Activated CD4-positive, alpha-beta T cell treated with anti-CD3 and anti-CD28 coated beads, Interleukin-2, amount 10 ng/mL, durations not matched to agents 24 days and 14 days (primary cell): ENCODE measurements at regions of chr15 and their contacts with region 1.

Region 1: GRCh38 chr15:50134520-50135024 is 15.5 kb upstream of the ATP8B4 start:
- DNase-seq: peak; percentile 67
- H3K4me3 Mint-ChIP-seq: peak overlapping the region; percentile 63
- H3K27ac Mint-ChIP-seq: peak overlapping the region; percentile 95
- H3K4me1 Mint-ChIP-seq: peaks cover 52% of the 10 kb centered on the region
- H3K27me3 Mint-ChIP-seq: peaks cover 2% of the 10 kb centered on the region

Region 2: DNA sequence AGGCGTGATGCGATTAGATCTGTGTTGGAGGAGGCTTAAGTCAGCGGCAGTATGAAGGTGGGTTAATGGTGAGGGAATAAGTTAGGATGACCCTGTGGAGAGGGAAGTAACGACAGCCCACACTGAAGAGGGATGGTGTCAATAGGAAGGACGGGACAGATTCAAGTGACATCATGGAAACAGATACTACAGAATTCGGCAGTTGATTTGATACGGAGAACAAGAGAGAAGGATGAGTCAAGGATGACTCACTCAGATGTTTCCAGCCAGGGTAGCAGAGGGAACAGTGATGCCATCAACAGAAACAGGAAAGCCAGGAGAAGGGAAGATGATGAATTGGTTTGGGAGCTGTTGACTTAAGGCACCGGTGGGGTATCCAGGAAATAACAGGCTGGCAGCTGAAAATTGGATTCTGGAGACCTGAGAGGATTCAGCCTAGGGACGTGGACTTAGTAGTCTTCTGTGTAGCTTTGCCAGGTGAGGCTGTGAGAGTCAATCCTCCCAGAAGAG is 1208.8 kb before region 1 on chr15:
- intact Hi-C with region 1: loop called (anchors 2 kb)
- DNase-seq: peak; percentile 70
- H3K4me3 Mint-ChIP-seq: peak overlapping the region; percentile 46
- H3K27ac Mint-ChIP-seq: peak overlapping the region; percentile 97
- H3K4me1 Mint-ChIP-seq: peaks cover 61% of the 10 kb centered on the region
- H3K27me3 Mint-ChIP-seq: peaks cover 2% of the 10 kb centered on the region

Region 3: DNA sequence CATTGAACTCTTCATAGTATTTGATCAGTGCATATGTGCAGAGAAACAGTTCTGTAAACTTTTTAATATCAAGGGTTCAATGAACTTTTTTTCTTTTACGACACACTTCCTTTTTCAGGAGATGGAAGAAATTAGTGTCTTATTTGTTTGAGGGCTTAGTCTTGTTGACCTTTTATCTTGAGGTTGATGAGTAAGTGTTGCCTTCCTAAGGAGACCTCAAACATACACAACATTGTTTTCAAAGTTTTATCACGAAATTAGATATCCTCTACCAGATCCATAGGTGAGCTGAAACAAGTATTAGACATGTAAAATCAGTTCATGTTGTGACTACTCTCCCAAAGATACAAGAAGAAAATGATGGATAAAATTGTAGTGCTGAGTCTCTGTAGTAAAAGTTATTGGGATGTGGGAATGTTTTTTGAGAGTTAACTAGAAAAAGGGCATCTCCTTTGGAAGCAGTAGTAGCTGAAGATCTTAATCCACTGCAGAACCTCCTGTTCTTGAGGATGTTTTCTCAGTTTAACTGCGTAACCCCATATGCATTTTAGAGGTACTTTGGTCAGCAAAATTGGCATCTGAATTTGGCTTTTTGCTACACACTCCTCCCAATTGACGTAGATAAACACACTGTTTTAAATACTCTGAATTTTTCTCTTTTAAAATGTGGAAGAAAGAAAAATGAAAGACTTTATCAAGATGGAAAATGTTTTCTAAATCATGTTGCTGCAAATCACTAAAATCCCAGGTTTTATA is 847.7 kb before region 1 on chr15:
- intact Hi-C with region 1: loop called (anchors 2 kb)
- DNase-seq: no peak
- H3K4me3 Mint-ChIP-seq: peak overlapping the region; percentile 46
- H3K27ac Mint-ChIP-seq: peak overlapping the region; percentile 85
- H3K4me1 Mint-ChIP-seq: peaks cover 43% of the 10 kb centered on the region
- H3K27me3 Mint-ChIP-seq: no peaks in the 10 kb centered on the region

Region 4: GRCh38 chr15:49817100-49817499 is 317.5 kb before region 1 on chr15:
- intact Hi-C with region 1: no loop called
- DNase-seq: no peak
- H3K4me3 Mint-ChIP-seq: no peak overlapping the region
- H3K27ac Mint-ChIP-seq: no peak overlapping the region
- H3K4me1 Mint-ChIP-seq: peaks cover 6% of the 10 kb centered on the region
- H3K27me3 Mint-ChIP-seq: peaks cover 4% of the 10 kb centered on the region

Region 5: DNA sequence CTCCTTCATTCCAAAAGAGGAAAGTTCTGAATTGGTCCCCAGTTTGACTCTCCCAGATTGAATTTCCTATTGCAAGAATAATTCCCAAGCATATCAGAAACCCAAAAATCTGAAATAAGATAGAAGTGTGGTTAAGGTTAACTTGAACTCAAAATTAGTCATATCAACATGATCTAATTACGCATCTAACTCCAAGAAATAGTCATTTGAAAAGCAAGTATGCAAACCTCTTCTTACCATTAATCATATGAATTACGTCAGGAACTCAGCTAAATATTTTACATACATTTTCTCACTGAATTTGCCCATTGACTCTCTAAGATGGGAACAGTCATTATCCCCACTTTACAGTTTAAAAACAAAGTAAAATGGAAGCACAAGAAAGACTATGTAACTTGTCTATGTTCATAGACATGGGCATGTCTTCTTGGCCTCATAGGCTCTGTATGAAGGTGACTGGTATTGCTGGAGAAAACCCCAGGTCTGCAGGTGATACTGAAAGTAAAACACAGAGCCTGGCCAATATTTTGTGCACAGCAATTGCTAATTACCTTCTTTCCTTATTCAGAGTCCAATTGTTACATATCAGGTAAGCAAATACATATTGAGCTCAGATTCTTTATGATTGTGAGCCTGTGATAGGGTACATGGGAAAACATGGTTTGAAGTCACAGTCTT is 154.7 kb before region 1 on chr15:
- intact Hi-C with region 1: no loop called
- DNase-seq: no peak
- H3K4me3 Mint-ChIP-seq: no peak overlapping the region
- H3K27ac Mint-ChIP-seq: no peak overlapping the region
- H3K4me1 Mint-ChIP-seq: no peaks in the 10 kb centered on the region
- H3K27me3 Mint-ChIP-seq: no peaks in the 10 kb centered on the region

Region 6: DNA sequence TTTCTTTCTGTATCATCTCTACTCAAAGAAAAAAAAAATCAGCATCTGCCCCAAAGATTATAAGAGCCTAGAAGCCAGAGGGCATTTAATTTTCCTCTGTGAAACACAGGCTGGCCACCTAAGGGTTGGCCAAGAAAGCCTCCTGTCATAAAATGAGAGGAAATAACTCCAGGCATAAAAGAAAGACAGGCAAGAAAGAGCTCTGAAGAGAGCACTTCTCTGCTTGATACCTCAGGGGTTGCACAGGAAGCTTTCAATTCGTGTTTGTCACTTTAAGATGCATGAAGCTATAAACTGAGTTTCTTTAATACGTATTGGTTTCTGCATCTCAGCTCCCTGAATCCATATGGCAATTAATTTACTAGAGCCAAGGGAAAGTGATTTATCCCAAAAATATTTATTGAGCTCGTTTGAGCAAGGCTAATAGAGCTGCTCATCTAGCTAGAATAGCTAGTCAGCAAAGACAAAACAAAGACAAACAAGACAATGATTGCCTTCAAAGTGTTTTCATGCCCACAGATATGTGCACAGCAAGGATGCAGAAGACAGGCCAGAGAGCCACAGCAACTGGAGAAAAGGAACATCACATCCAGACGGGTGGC is 51.0 kb before region 1 on chr15:
- intact Hi-C with region 1: no loop called
- DNase-seq: peak; percentile 53
- H3K4me3 Mint-ChIP-seq: no peak overlapping the region
- H3K27ac Mint-ChIP-seq: no peak overlapping the region
- H3K4me1 Mint-ChIP-seq: peaks cover 22% of the 10 kb centered on the region
- H3K27me3 Mint-ChIP-seq: no peaks in the 10 kb centered on the region

Region 7: GRCh38 chr15:50119063-50120040 is 15.2 kb before region 1 on chr15 and contains the start of gene ATP8B4:
- intact Hi-C with region 1: loop called (anchors 1 kb)
- DNase-seq: peak; percentile 77
- H3K4me3 Mint-ChIP-seq: peak within 1 kb of the TSS; percentile 87
- H3K27ac Mint-ChIP-seq: peak within 1 kb of the TSS; percentile 94
- H3K4me1 Mint-ChIP-seq: peaks cover 44% of the 10 kb centered on the region
- H3K27me3 Mint-ChIP-seq: no peaks in the 10 kb centered on the region
- total RNA-seq, gene ATP8B4: 29.9 and 38.5 TPM in 2 replicates

Region 8: DNA sequence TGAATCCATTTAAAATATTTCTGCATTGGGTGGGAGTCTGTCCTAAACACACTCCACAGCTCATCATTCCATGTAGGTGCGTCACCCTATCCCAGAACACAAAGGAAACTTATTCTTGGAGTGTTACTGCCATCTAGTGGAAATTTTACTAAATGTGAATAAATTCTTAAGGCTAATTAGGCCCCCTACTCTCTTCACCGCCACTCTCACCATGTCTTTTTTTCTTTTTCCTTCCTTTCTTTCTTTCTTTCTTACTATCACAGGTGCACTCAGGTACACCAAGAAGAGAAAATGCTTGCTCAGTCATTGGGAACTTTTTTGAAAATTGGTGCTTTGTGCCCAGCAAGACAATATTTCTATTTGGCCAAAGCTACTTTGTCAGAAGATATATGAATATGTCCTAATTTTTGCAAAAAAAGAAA is 10.9 kb after region 1 on chr15:
- intact Hi-C with region 1: no loop called
- DNase-seq: peak; percentile 62
- H3K4me3 Mint-ChIP-seq: no peak overlapping the region
- H3K27ac Mint-ChIP-seq: no peak overlapping the region
- H3K4me1 Mint-ChIP-seq: peaks cover 45% of the 10 kb centered on the region
- H3K27me3 Mint-ChIP-seq: no peaks in the 10 kb centered on the region

Region 9: DNA sequence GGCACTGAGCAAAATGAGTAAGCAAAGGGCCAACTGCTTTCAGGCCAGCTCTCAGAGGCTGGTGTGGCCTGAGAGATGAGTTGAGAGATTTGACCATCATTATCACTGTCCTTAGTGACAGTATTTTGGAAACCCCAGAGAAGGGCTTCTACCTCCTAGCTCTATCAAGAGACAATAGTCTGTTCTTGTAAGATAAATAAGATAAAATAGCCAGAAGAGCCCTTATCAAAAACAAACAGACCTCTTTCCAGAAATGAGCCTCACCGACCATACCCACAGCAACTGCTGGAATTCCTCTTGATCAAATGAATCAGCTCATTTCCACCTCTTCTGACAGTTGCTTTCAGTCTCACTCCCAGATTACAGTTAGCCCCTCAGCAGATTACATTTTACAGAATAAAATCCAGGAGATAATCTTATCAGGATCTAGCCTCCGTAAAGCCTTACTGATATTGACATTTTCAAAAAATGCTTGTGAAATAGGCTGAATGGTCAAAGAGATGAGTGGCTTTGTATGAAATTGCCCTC is 126.5 kb after region 1 on chr15:
- intact Hi-C with region 1: loop called (anchors 1 kb)
- DNase-seq: peak; percentile 61
- H3K4me3 Mint-ChIP-seq: peak overlapping the region; percentile 71
- H3K27ac Mint-ChIP-seq: peak overlapping the region; percentile 95
- H3K4me1 Mint-ChIP-seq: peaks cover 68% of the 10 kb centered on the region
- H3K27me3 Mint-ChIP-seq: no peaks in the 10 kb centered on the region